ENCODE measurements at regions of chr7 and their contacts with region 1.

Region 1: GRCh38 chr7:18040196-18040595 is 12.6 kb upstream of the PRPS1L1 start:
- DNase-seq: peak; percentile 90
- ATAC-seq: peak; percentile 96
- H3K4me3 ChIP-seq: no peak overlapping the region
- H3K27ac ChIP-seq: peak overlapping the region; percentile 49; the same call in 1 of the 2 replicates
- H3K4me1 ChIP-seq: peaks cover 2% of the 10 kb centered on the region
- H3K27me3 ChIP-seq: no peaks in the 10 kb centered on the region
- CTCF ChIP-seq: no peak
- POLR2A ChIP-seq: no peak
- RAD21 ChIP-seq: no peak

Region 2: GRCh38 chr7:18027628-18028027 is 12.6 kb before region 1 on chr7 and contains the start of gene PRPS1L1:
- CTCF ChIA-PET with region 1: no interaction called
- POLR2A ChIA-PET with region 1: no interaction called
- dilution Hi-C with region 1: no loop called
- in situ Hi-C with region 1: no loop called
- intact Hi-C with region 1: no loop called
- DNase-seq: no peak
- ATAC-seq: no peak
- H3K4me3 ChIP-seq: no peak within 1 kb of the TSS
- H3K27ac ChIP-seq: no peak within 1 kb of the TSS
- H3K4me1 ChIP-seq: no peaks in the 10 kb centered on the region
- H3K27me3 ChIP-seq: no peaks in the 10 kb centered on the region
- CTCF ChIP-seq: no peak
- POLR2A ChIP-seq: no peak
- RAD21 ChIP-seq: no peak
- total RNA-seq, gene PRPS1L1: not detected in 2 replicates

Region 3: GRCh38 chr7:18103436-18104218 is 63.4 kb after region 1 on chr7:
- CTCF ChIA-PET with region 1: no interaction called
- POLR2A ChIA-PET with region 1: no interaction called
- dilution Hi-C with region 1: no loop called
- in situ Hi-C with region 1: no loop called
- intact Hi-C with region 1: loop called (anchors 2 kb)
- DNase-seq: no peak
- ATAC-seq: no peak
- H3K4me3 ChIP-seq: no peak overlapping the region
- H3K27ac ChIP-seq: no peak overlapping the region
- H3K4me1 ChIP-seq: no peaks in the 10 kb centered on the region
- H3K27me3 ChIP-seq: no peaks in the 10 kb centered on the region
- CTCF ChIP-seq: no peak
- POLR2A ChIP-seq: no peak
- RAD21 ChIP-seq: no peak

Measured in IMR-90 (cell line).